ENCODE measurements at regions of chr3 and their contacts with region 1.

Region 1: DNA sequence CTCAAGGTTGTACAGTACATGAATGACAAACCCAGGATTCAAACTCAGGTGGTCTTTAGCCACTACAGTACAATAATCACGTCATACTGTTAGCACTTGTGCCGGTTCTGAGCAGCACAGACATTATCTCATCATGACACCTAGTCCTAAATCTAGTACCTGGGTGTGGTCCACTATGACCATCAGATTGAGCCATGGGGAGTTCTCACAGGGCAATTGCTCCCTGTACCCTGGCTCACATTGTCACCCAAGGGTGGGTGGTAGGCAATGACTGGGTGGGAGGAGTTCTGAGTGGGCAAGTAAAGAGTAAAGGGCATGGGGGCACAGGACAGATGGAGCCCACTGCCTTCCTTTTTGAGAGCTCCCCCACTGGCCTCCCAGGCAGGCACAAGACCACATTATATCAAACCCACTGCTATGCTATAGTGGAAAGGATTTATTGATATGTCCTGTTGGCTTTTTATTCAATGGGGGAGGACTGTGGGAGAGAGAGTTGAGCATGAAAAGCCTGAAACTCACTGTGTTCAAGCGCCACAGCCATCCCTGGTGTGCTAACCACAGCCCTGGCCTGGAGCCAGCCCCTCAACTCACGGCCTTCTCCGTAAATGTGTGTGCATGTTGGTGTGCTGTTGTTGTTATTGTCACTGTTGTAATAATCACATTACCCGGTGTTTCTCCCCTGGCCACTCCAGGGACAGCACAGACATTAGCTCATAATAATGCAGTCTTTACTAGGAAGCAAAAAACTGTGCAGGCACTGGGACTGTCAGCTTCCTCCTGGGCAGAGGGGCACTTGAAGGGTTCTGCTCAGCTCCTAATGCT is 27.3 kb downstream of the ADCY5 start:
- DNase-seq: no peak
- H3K4me3 ChIP-seq: no peak overlapping the region
- H3K27ac ChIP-seq: peak overlapping the region in 1 of 2 donors; percentile 28
- H3K4me1 ChIP-seq: no peaks in the 10 kb centered on the region
- H3K27me3 ChIP-seq: no peaks in the 10 kb centered on the region
- CTCF ChIP-seq: no peak
- POLR2A ChIP-seq: no peak

Region 2: DNA sequence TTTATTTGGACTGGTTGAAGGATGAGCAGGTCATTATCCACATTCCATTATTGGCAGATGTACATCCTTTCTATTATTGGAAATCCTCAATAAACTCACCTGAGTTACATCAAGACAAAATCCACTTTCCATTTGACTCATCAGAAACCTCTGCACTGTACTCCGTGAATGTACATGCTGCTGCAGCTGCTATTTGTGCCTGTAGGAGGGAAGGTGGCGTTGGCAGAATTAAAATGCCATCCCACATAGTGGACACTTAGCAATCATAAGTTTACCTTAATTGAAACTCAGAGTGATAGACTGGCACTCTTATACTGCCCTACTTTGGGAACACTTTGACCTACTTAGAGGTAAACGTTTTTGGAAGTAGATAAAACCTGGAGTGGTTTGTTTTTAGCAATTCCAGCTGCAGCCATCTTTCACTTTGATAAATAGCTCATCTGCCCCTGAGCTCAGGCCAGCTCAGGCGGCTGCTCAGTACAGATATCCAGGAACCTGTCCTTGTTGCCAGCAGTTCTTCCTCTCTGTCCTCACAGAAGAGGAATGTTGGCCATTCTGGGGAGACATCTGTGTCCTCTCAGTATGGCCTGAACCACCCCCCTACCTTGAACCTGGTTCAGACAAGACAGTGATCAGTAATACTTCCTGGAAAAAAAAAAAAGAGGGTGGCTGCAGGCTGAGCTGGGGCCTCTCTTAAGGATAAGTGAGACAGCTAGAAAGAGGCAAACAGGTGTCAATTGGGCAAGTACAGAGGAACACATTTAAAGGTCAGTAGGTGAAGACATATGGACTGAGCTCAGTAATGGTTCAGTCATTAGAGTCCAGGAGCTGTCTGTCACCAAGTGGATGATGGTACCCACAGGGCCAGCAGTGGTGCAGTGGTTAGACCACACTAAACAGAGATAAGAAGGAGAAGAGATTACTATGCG is 1155.3 kb after region 1 on chr3:
- intact Hi-C with region 1: loop called (anchors 5 kb)
- DNase-seq: no peak
- H3K4me3 ChIP-seq: no peak overlapping the region
- H3K27ac ChIP-seq: no peak overlapping the region
- H3K4me1 ChIP-seq: no peaks in the 10 kb centered on the region
- H3K27me3 ChIP-seq: no peaks in the 10 kb centered on the region
- CTCF ChIP-seq: no peak
- POLR2A ChIP-seq: no peak